ENCODE measurements at regions of chr20 and their contacts with region 1.

Region 1: GRCh38 chr20:63537525-63538203 is 488 bp upstream of the PTK6 start:
- DNase-seq: peak; percentile 90
- H3K4me3 ChIP-seq: peak overlapping the region in 3 of 4 donors; percentile 20 to 34 (median 26)
- H3K27ac ChIP-seq: peak overlapping the region in 3 of 4 donors; percentile 26 to 46 (median 31)
- H3K4me1 ChIP-seq: peaks cover 0 to 11% (median 9%) of the 10 kb centered on the region in 4 donors
- H3K27me3 ChIP-seq: peaks cover 13 to 49% (median 41%) of the 10 kb centered on the region in 3 donors
- CTCF ChIP-seq: peak; percentile 89 to 98 (median 95)
- EP300 ChIP-seq: no peak
- POLR2A ChIP-seq: peak in 1 of 2 donors; percentile 64

Region 2: GRCh38 chr20:63482856-63483695 is 54.6 kb before region 1 on chr20:
- intact Hi-C with region 1: no loop called
- DNase-seq: no peak
- H3K4me3 ChIP-seq: no peak overlapping the region
- H3K27ac ChIP-seq: no peak overlapping the region
- H3K4me1 ChIP-seq: no peaks in the 10 kb centered on the region
- H3K27me3 ChIP-seq: peaks cover 14 to 97% (median 51%) of the 10 kb centered on the region in 3 donors
- CTCF ChIP-seq: no peak
- EP300 ChIP-seq: no peak
- POLR2A ChIP-seq: no peak

Region 3: DNA sequence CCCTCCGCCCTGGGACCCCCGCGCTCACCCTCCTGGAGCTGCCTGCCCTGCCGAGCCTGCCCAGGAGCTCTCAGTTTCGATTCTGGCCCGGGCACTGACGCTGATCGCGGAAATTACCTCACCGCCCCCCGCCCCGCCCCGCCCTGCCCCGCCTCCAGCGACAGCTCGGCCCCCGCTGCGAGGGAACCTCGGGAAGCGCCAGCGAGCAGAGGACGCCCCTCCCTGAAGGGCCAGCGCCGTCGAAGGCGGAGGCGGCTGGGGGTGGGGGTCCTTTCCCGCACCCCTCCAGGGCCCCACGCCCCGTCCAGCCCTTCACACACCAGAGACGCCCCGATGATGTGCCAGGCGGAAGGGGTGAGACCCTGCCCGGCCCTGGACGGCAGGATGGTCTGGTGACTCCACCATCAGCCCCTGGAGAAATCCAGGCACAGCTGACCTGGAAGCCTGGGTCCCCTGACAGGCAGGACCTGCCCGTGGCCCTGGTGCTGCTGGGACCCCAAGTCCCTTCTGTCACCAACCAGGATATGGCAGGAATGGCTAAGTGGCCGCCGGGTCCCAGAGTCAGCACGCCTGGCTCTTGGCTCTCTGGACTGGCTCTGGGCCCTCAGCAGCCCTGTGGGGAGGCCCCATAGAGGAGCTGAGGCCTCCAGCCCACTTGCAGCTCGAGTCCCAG is 36.6 kb after region 1 on chr20 and contains the start of gene HELZ2:
- intact Hi-C with region 1: loop called (anchors 1 kb)
- DNase-seq: peak; percentile 90
- H3K4me3 ChIP-seq: peak within 1 kb of the TSS; percentile 88 to 97 (median 92)
- H3K27ac ChIP-seq: peak within 1 kb of the TSS; percentile 78 to 87 (median 81)
- H3K4me1 ChIP-seq: peaks cover 0 to 29% (median 27%) of the 10 kb centered on the region in 4 donors
- H3K27me3 ChIP-seq: no peaks in the 10 kb centered on the region
- CTCF ChIP-seq: no peak
- EP300 ChIP-seq: no peak
- POLR2A ChIP-seq: no peak
- total RNA-seq, gene HELZ2: 9.5 to 48.1 (median 15.4) TPM

Region 4: GRCh38 chr20:63791497-63792156 is 254.0 kb after region 1 on chr20:
- intact Hi-C with region 1: loop called (anchors 1 kb)
- DNase-seq: no peak
- H3K4me3 ChIP-seq: no peak overlapping the region
- H3K27ac ChIP-seq: peak overlapping the region in 1 of 4 donors; percentile 34
- H3K4me1 ChIP-seq: no peaks in the 10 kb centered on the region
- H3K27me3 ChIP-seq: peaks cover 0 to 2% (median 0%) of the 10 kb centered on the region in 3 donors
- CTCF ChIP-seq: no peak
- EP300 ChIP-seq: no peak
- POLR2A ChIP-seq: no peak

Measured in sigmoid colon (tissue), 7 donors.